ENCODE measurements at regions of chr14 and their contacts with region 1.

Region 1: GRCh38 chr14:23379366-23380196 is 2.7 kb downstream of the CMTM5 start:
- DNase-seq: no peak
- ATAC-seq: peak; percentile 75
- H3K4me3 ChIP-seq: no peak overlapping the region
- H3K27ac ChIP-seq: no peak overlapping the region
- H3K4me1 ChIP-seq: no peaks in the 10 kb centered on the region
- H3K27me3 ChIP-seq: no peaks in the 10 kb centered on the region

Region 2: DNA sequence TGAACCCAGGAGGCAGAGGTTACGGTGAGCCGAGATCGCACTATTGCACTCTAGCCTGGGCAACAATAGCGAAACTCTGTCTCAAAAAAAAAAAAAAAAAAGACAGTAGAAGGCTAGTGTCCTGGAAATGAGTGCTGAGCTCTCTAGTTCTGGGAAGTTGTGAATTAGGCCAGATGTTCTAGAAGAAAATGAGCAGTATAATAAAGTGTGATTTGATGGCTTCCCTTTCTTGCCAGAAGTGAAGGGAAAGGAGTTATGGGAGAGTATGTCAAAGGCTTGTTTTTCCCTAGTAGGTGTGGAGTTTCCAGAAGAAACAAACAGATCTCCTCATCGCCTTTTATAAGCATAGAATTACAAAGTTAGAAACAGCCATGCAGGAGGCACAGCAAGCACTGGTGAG is 121.3 kb before region 1 on chr14:
- intact Hi-C with region 1: loop called in 1 of 2 experiments (anchors 5 kb)
- DNase-seq: no peak
- ATAC-seq: no peak
- H3K4me3 ChIP-seq: no peak overlapping the region
- H3K27ac ChIP-seq: no peak overlapping the region
- H3K4me1 ChIP-seq: no peaks in the 10 kb centered on the region
- H3K27me3 ChIP-seq: no peaks in the 10 kb centered on the region

Region 3: GRCh38 chr14:23269193-23269592 is 110.4 kb before region 1 on chr14:
- intact Hi-C with region 1: loop called (anchors 5 kb)
- DNase-seq: no peak
- ATAC-seq: no peak
- H3K4me3 ChIP-seq: no peak overlapping the region
- H3K27ac ChIP-seq: no peak overlapping the region
- H3K4me1 ChIP-seq: no peaks in the 10 kb centered on the region
- H3K27me3 ChIP-seq: no peaks in the 10 kb centered on the region

Region 4: GRCh38 chr14:23327947-23328744 is 51.4 kb before region 1 on chr14:
- intact Hi-C with region 1: loop called (anchors 1 to 5 kb)
- DNase-seq: no peak
- ATAC-seq: peak; percentile 87
- H3K4me3 ChIP-seq: no peak overlapping the region
- H3K27ac ChIP-seq: no peak overlapping the region
- H3K4me1 ChIP-seq: no peaks in the 10 kb centered on the region
- H3K27me3 ChIP-seq: no peaks in the 10 kb centered on the region

Region 5: GRCh38 chr14:23494223-23494622 is 114.6 kb after region 1 on chr14:
- intact Hi-C with region 1: no loop called
- DNase-seq: no peak
- ATAC-seq: no peak
- H3K4me3 ChIP-seq: no peak overlapping the region
- H3K27ac ChIP-seq: no peak overlapping the region
- H3K4me1 ChIP-seq: no peaks in the 10 kb centered on the region
- H3K27me3 ChIP-seq: no peaks in the 10 kb centered on the region